ENCODE measurements at regions of chr19 and their contacts with region 1.

Region 1: DNA sequence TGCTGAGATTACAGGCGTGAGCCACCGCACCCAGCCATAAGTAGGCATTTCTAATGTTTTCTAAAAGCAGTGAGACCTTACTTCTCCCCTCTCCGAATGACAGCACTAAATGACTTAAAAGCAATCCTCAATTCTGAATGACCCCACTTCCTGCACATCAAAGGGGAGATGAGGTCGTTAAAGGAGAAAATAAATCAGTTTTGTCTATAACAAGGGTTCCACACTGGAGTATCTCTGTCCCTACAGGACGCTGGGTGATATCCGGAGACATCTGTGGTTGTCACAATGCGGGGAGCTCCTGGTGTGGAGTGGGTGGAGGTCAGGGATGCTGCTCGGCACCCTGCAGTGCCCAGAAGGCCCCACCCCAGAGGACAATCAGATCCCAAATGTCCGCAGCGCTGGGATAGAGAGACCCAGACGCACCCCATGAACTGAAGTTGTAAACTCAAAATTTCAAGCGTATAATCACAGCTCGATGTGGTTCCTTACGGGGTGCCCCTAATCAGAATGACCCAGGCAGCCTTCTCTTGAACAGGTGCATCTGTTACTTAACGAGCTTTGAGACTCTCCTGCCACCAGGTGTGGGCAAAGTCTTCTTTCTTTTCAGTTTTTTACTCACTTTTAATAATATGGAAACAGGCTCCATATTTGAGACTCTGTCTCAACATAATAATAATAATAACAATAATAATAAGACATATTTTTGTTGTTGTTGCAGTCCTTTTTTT is 2.9 kb downstream of the GNG7 start:
- DNase-seq: no peak

Region 2: GRCh38 chr19:2663920-2664571 is 35.5 kb before region 1 on chr19:
- in situ Hi-C with region 1: loop called (anchors 5 kb)
- DNase-seq: no peak